Activated T-helper 2 cell treated with anti-CD3 and anti-CD28 coated beads, Interferon-gamma antibody, Interleukin-2, Interleukin-4, amounts not matched to agents 10 μg/mL and 5 μg/mL and 100 μg/mL, durations not matched to agents 14 hours and 24 hours and 36 hours (primary cell): ENCODE measurements at regions of chr9 and their contacts with region 1.

Region 1: DNA sequence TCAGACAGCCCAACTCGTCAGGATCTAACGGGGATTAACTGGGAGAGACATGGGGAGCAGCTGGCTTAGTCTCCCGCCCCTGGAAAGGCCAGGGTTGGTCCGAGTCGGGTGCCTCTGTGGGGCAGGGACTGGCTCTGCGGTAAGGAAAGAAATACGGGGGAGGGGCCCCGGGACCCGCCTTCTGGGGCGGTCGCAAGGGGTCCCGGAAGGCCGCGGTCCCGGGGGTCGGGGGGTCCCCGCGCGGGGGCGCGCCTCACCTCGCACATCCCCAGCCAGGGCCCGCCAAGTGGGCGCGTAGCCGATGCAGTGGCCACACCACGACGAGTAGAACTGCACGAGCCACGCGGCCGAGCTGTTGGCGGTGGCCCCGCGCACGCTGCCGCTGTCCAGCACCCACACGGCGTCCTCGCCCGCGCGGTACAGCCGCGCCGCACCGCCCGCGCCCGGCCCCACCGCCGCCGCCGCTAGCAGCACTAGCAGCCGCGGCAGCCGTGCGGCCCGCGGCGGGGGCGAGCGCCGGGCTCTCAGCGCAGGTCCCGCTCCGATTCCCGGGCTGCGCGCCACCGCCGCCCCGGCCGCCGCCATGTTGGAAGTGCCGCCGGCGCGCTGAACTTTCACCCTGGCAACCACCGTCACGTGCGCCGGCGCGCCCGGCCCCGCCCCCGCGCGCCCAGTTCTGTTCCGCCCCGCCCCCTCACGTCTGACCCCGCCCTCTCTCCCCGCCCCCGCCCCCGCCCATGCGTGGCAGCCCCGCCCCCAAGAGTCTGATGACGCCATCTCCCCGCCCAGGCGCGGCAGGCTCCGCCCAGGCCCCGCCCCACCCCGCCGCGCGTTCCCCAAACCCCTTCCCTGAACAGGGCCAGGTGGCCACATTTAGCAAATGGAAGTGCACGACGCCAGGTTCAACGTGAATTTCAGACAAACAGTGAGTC is at the start of gene QSOX2:
- DNase-seq: peak; percentile 81
- H3K4me3 Mint-ChIP-seq: peak within 1 kb of the TSS; percentile 92
- H3K27ac Mint-ChIP-seq: peak within 1 kb of the TSS; percentile 90
- H3K4me1 Mint-ChIP-seq: peaks cover 26% of the 10 kb centered on the region
- H3K27me3 Mint-ChIP-seq: peaks cover 4% of the 10 kb centered on the region
- total RNA-seq, gene QSOX2: 24.9 and 25.4 TPM in 2 replicates

Region 2: GRCh38 chr9:136231478-136232297 is 13.8 kb before region 1 on chr9:
- intact Hi-C with region 1: loop called (anchors 1 kb)
- DNase-seq: peak; percentile 43
- H3K4me3 Mint-ChIP-seq: peak overlapping the region; percentile 64
- H3K27ac Mint-ChIP-seq: peak overlapping the region; percentile 82
- H3K4me1 Mint-ChIP-seq: peaks cover 42% of the 10 kb centered on the region
- H3K27me3 Mint-ChIP-seq: no peaks in the 10 kb centered on the region

Region 3: GRCh38 chr9:136267261-136268111 is 22.0 kb after region 1 on chr9:
- intact Hi-C with region 1: loop called (anchors 1 kb)
- DNase-seq: peak; percentile 81
- H3K4me3 Mint-ChIP-seq: peak overlapping the region; percentile 69
- H3K27ac Mint-ChIP-seq: peak overlapping the region; percentile 68
- H3K4me1 Mint-ChIP-seq: peaks cover 4% of the 10 kb centered on the region
- H3K27me3 Mint-ChIP-seq: peaks cover 7% of the 10 kb centered on the region